B cell (primary cell): ENCODE measurements at regions of chr1 and their contacts with region 1.

Region 1: DNA sequence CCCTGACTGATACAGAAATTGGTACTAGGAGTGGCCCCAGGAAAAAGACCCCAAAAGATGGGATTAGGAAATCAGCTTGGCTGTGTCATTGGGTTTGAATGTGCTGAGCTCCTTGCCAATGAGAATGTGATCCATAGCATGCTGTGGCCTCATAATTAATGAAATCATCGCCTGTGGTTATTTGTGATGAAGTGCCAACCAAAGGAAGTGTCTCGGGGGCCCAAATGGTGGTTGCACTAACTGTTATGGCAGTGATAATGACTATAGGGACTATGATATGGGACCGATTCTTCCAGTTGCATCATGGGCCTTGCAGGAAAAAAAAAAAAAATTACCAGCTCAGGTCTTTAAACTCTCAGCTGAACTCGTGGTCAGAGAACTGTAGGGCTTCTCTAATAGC is 15.4 kb upstream of the ZDHHC18 start:
- DNase-seq: no peak
- ATAC-seq: no peak
- H3K4me3 ChIP-seq: no peak overlapping the region
- H3K4me3 Mint-ChIP-seq: no peak overlapping the region
- H3K27ac ChIP-seq: no peak overlapping the region
- H3K27ac Mint-ChIP-seq: no peak overlapping the region
- H3K4me1 ChIP-seq: no peaks in the 10 kb centered on the region
- H3K4me1 Mint-ChIP-seq: peaks cover 3% of the 10 kb centered on the region
- H3K27me3 ChIP-seq: peaks cover 0 to 6% (median 0%) of the 10 kb centered on the region in 4 experiments
- H3K27me3 Mint-ChIP-seq: no peaks in the 10 kb centered on the region
- CTCF ChIP-seq: no peak

Region 2: DNA sequence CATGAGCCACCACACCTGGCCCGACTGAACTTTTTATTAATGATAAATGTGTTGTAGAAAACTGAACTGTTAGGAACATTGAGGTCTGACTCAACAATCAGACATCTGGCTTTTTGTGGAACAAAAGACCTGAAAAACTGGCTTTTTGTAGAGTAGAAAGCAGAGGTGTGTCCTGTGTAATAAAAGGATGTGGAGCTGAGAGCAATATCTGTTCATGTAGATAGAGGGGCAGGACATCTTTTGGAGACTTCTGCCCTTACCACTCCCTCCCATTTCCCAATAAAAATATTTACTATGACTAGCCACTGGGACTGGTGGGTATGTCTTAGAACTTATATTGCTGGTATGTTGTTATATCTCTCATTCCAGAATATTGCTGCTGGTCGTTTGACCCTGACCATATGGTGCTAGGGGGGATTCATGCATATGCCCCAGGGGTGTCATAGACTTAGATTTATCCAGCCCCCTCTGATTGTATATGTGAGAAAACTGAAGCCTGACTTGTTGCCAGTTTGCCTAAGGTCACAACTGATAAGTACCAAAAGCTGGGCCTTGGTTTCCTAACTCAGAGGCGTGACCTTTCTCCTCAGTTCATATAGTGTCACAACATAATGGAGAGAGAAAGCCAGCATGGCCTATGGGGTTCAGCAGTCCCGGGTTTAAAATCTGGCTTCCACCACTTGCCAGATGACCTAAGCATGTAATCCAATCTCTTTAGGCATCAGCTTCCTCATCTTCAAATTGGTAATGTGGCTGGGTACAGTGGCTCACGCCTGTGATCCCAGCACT is 56.8 kb before region 1 on chr1:
- CTCF ChIA-PET with region 1: no interaction called
- POLR2A ChIA-PET with region 1: no interaction called
- intact Hi-C with region 1: no loop called
- DNase-seq: no peak
- ATAC-seq: no peak
- H3K4me3 ChIP-seq: no peak overlapping the region
- H3K4me3 Mint-ChIP-seq: no peak overlapping the region
- H3K27ac ChIP-seq: peak overlapping the region in 1 of 2 donors; percentile 32
- H3K27ac Mint-ChIP-seq: peak overlapping the region; percentile 10
- H3K4me1 ChIP-seq: peaks cover 6 to 12% of the 10 kb centered on the region in 2 donors
- H3K4me1 Mint-ChIP-seq: peaks cover 42% of the 10 kb centered on the region
- H3K27me3 ChIP-seq: no peaks in the 10 kb centered on the region
- H3K27me3 Mint-ChIP-seq: no peaks in the 10 kb centered on the region
- CTCF ChIP-seq: no peak

Region 3: GRCh38 chr1:26799479-26800142 is 11.4 kb before region 1 on chr1:
- CTCF ChIA-PET with region 1: interaction called, 19 read pairs
- POLR2A ChIA-PET with region 1: no interaction called
- intact Hi-C with region 1: no loop called
- DNase-seq: no peak
- ATAC-seq: no peak
- H3K4me3 ChIP-seq: no peak overlapping the region
- H3K4me3 Mint-ChIP-seq: no peak overlapping the region
- H3K27ac ChIP-seq: no peak overlapping the region
- H3K27ac Mint-ChIP-seq: no peak overlapping the region
- H3K4me1 ChIP-seq: no peaks in the 10 kb centered on the region
- H3K4me1 Mint-ChIP-seq: peaks cover 7% of the 10 kb centered on the region
- H3K27me3 ChIP-seq: no peaks in the 10 kb centered on the region
- H3K27me3 Mint-ChIP-seq: no peaks in the 10 kb centered on the region
- CTCF ChIP-seq: no peak

Region 4: GRCh38 chr1:26826261-26827105 is 15.4 kb after region 1 on chr1 and contains the start of gene ZDHHC18:
- CTCF ChIA-PET with region 1: interaction called, 84 read pairs
- POLR2A ChIA-PET with region 1: interaction called, 8 read pairs
- intact Hi-C with region 1: no loop called
- DNase-seq: peak; percentile 82
- ATAC-seq: peak; percentile 92
- H3K4me3 ChIP-seq: peak within 1 kb of the TSS; percentile 48 to 89 (median 66)
- H3K4me3 Mint-ChIP-seq: peak within 1 kb of the TSS; percentile 93
- H3K27ac ChIP-seq: peak within 1 kb of the TSS; percentile 22 to 64
- H3K27ac Mint-ChIP-seq: peak within 1 kb of the TSS; percentile 88
- H3K4me1 ChIP-seq: peaks cover 32 to 52% of the 10 kb centered on the region in 2 donors
- H3K4me1 Mint-ChIP-seq: peaks cover 49% of the 10 kb centered on the region
- H3K27me3 ChIP-seq: peaks cover 0 to 16% (median 4%) of the 10 kb centered on the region in 4 experiments
- H3K27me3 Mint-ChIP-seq: peaks cover 7% of the 10 kb centered on the region
- CTCF ChIP-seq: peak; percentile 48
- total RNA-seq, gene ZDHHC18: 25.8 and 28.2 TPM in 2 replicates

Region 5: DNA sequence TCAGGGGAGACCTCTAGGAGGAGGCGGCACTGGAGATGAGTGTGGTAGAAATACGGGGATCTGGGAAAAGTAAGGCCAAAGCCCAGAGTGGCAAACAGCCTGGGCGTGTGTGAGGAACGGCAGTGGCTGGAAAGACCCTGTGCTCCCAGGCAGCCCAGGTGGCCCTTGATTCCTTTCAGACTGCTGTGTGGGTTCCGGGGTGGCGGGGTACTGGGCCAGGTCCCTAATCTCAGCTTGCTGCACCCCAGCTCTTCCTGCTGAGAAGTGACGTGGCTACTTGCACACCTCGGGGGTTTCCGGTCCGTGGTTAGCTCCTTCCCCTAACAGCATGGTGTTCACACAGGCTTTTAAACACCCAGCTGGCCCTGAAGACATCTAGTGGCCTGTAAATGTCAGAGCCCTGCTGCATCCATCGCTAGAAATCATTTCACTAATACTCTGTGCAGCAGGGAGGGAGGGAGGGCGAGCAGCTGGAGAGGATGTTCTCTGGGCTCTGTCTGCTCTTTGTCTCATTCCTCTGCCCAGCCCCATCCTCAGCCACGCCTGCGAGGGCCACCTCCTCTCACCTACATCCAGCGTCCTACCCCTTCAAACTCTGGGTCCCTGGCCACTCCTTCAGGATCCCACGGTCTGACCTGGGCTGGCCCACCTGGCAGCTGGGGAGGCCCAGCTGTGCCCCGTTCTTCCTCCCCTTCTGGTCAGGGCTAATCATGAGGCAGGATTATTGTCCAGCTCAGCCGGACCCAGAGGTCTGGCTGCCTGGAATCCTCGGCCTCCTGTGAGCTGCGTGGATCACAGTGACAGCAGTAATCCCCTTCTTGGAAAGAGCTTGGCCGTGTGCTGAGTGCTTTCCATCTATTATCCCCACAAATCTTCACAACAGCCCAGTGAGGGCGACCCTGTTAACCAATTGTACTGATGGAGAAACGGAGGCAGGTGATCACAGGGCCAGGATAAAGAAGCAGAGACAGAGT is 22.7 kb after region 1 on chr1:
- CTCF ChIA-PET with region 1: interaction called, 106 read pairs
- POLR2A ChIA-PET with region 1: interaction called, 9 read pairs
- intact Hi-C with region 1: loop called (anchors 2 kb)
- DNase-seq: peak; percentile 95
- ATAC-seq: peak; percentile 96
- H3K4me3 ChIP-seq: peak overlapping the region in 4 of 5 experiments; percentile 3 to 54 (median 30)
- H3K4me3 Mint-ChIP-seq: peak overlapping the region; percentile 78
- H3K27ac ChIP-seq: peak overlapping the region; percentile 83 to 98
- H3K27ac Mint-ChIP-seq: peak overlapping the region; percentile 92
- H3K4me1 ChIP-seq: peaks cover 30 to 48% of the 10 kb centered on the region in 2 donors
- H3K4me1 Mint-ChIP-seq: peaks cover 56% of the 10 kb centered on the region
- H3K27me3 ChIP-seq: no peaks in the 10 kb centered on the region
- H3K27me3 Mint-ChIP-seq: no peaks in the 10 kb centered on the region
- CTCF ChIP-seq: peak; percentile 58

Region 6: DNA sequence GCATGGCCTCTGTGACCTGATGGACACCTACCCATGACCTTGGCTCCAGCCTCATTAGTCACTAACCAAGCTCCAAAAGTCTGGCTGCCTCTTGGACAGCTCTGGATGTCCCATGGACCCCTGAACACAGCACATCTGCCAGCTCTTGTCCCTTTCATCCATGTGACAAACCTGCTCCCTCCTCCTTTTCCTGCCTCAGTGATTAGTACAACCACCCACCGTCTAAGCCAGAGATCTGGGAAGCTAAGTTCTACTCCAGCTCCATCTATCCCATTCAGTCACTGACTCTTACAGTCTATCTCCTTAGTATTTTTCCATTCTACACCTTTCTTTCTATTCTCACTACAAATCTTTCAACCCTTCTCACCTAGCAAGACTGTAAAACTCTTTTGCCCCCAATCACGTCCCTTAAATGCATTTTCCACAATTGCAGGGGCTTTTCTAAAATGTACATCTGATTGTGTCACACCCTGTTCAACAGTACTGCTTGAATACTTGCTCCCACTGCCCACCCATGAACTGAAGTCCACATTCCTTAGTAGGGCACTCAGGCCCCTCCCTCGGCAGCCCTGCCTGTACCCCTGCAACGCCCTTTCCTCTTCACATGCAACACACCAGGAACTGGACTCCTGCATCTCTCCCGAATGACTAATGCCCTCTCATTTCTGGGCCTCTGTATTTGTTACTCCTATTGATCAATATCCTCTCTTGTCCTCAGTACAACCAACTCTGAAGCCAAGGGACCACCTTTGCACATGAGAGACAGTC is 71.8 kb after region 1 on chr1:
- CTCF ChIA-PET with region 1: interaction called, 79 read pairs
- POLR2A ChIA-PET with region 1: no interaction called
- intact Hi-C with region 1: loop called (anchors 1 kb)
- DNase-seq: no peak
- ATAC-seq: no peak
- H3K4me3 ChIP-seq: no peak overlapping the region
- H3K4me3 Mint-ChIP-seq: no peak overlapping the region
- H3K27ac ChIP-seq: no peak overlapping the region
- H3K27ac Mint-ChIP-seq: no peak overlapping the region
- H3K4me1 ChIP-seq: peaks cover 0 to under 1% of the 10 kb centered on the region in 2 donors
- H3K4me1 Mint-ChIP-seq: peaks cover 8% of the 10 kb centered on the region
- H3K27me3 ChIP-seq: no peaks in the 10 kb centered on the region
- H3K27me3 Mint-ChIP-seq: no peaks in the 10 kb centered on the region
- CTCF ChIP-seq: no peak

Region 7: DNA sequence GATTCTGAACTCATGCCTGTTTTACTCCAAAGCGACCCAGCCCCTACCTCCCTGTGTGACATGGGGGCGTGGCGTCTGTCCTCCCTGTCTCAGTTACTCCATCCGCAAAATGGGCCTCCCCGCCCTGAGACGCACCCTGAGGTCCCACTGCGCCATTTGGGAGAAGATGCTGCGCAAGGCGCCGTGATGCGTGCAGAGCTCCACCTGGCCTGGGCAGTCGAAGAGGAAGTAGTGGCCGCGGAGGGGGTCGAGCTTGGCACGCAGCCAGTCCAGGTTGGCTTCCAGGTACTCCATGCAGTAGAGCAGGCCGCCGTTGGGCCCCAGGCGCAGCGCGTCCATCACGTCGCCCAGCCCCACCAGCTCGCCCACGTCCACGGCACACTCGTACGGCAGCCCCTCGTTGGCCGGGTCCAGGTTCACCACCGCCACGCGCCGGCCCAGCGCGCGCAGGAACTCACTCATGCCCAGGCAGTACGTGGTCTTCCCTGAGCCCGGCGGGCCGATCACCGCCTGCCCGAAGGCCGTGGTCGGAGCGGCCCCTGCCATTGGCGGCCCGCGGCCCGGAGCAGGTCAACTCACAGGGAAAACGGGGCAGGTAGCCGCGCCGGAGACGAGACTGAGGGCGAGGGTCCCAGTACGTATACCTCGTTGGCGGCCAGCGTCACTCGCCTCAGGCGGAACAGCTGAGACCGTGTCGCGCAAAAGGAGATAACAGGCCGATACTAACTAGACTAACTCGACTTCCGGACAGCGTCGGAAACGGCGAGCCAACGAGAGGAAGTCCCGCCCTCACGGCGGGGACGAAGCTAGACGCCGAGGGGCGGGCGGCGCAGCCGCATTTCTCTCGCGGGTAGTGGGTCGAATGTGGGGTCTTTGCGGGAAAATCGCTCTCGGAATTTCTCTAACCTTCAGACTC is 78.8 kb after region 1 on chr1 and contains the start of gene GPN2:
- CTCF ChIA-PET with region 1: interaction called, 10 read pairs
- POLR2A ChIA-PET with region 1: no interaction called
- intact Hi-C with region 1: no loop called
- DNase-seq: peak; percentile 88
- ATAC-seq: peak; percentile 92
- H3K4me3 ChIP-seq: peak within 1 kb of the TSS; percentile 73 to 94 (median 89)
- H3K4me3 Mint-ChIP-seq: peak within 1 kb of the TSS; percentile 96
- H3K27ac ChIP-seq: peak within 1 kb of the TSS; percentile 61 to 94
- H3K27ac Mint-ChIP-seq: peak within 1 kb of the TSS; percentile 95
- H3K4me1 ChIP-seq: peaks cover 15 to 21% of the 10 kb centered on the region in 2 donors
- H3K4me1 Mint-ChIP-seq: peaks cover 35% of the 10 kb centered on the region
- H3K27me3 ChIP-seq: no peaks in the 10 kb centered on the region
- H3K27me3 Mint-ChIP-seq: no peaks in the 10 kb centered on the region
- CTCF ChIP-seq: no peak
- total RNA-seq, gene GPN2: 40.7 and 43.5 TPM in 2 replicates